ENCODE measurements at regions of chr1 and their contacts with region 1.

Region 1: GRCh38 chr1:224513787-224514209 is 79.2 kb upstream of the WDR26 start:
- DNase-seq: peak; percentile 94
- H3K4me3 Mint-ChIP-seq: no peak overlapping the region
- H3K27ac Mint-ChIP-seq: no peak overlapping the region
- H3K4me1 Mint-ChIP-seq: no peaks in the 10 kb centered on the region
- H3K27me3 Mint-ChIP-seq: no peaks in the 10 kb centered on the region

Region 2: GRCh38 chr1:224106568-224107281 is 407.1 kb before region 1 on chr1:
- CTCF ChIA-PET with region 1: no interaction called
- intact Hi-C with region 1: no loop called
- DNase-seq: peak; percentile 42
- H3K4me3 Mint-ChIP-seq: no peak overlapping the region
- H3K27ac Mint-ChIP-seq: no peak overlapping the region
- H3K4me1 Mint-ChIP-seq: peaks cover 2% of the 10 kb centered on the region
- H3K27me3 Mint-ChIP-seq: no peaks in the 10 kb centered on the region

Region 3: GRCh38 chr1:224528900-224529299 is 15.1 kb after region 1 on chr1:
- CTCF ChIA-PET with region 1: interaction called, 11 read pairs
- intact Hi-C with region 1: no loop called
- DNase-seq: no peak
- H3K4me3 Mint-ChIP-seq: no peak overlapping the region
- H3K27ac Mint-ChIP-seq: no peak overlapping the region
- H3K4me1 Mint-ChIP-seq: no peaks in the 10 kb centered on the region
- H3K27me3 Mint-ChIP-seq: no peaks in the 10 kb centered on the region

Region 4: DNA sequence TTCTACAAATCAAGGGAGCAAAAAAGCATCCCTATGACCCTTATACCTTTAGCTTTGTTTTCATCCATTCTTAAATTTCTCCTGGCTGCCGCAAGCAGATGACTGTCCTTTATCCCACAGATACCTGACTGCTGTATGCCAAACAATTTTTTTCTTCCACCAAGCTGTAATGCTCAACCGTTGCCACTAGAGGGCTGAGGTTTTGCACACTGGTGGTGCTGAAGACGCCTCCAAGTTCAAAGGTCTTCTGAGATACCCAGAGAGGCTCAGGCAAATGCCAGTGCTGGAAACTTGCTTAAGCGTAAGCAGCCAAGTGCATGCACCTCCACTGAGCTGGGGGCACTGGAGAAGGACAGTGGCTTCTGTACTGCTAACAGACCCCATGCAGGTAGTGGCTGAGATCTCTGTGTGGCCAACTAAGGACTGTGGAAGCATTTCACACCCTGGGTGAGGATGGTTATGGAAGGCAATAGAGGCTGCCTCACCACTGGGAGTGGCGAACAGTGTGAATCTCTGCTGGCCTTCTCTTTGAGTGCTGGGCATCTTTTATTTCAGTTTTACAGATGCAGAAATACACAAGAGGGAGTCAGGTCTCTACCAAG is 130.9 kb after region 1 on chr1:
- CTCF ChIA-PET with region 1: interaction called, 18 read pairs
- intact Hi-C with region 1: loop called (anchors 1 kb)
- DNase-seq: peak; percentile 72
- H3K4me3 Mint-ChIP-seq: no peak overlapping the region
- H3K27ac Mint-ChIP-seq: no peak overlapping the region
- H3K4me1 Mint-ChIP-seq: no peaks in the 10 kb centered on the region
- H3K27me3 Mint-ChIP-seq: no peaks in the 10 kb centered on the region

Region 5: DNA sequence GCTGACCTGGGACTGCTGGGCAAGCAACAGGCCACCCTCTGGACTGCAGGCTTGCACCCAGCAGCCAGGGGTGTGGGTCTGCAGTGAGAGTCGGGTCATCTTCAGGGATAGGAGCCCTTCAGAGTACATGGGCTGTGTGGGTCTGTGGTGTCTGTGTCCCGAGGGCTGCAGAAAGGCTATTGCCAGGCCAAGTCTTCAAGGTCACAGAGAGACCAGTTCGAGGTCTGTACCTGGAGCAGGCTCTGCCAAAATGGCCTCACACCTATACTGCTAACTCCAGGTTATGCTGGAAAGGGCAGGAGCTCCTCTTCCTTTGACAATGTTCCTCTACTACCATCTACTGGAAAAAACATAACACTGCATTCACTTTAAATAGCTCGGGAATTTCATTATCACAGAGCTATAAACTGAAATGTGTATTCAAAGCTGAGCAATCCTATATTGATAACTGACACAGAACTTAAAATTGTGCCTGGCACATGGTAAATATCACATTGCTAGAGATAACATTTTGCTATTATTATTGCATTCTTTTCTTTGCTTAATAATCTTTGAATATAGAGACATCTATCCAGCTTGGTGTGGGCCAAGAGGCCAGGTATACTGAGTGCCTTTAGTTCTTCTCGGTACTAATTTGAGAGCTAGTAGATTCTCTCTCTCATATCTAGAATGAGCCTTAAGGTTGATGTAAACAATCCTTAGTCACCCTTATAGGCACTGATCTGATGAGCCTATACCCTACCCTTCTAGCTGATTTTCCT is 408.8 kb after region 1 on chr1:
- CTCF ChIA-PET with region 1: interaction called, 40 read pairs
- intact Hi-C with region 1: loop called (anchors 1 kb)
- DNase-seq: peak; percentile 6
- H3K4me3 Mint-ChIP-seq: no peak overlapping the region
- H3K27ac Mint-ChIP-seq: no peak overlapping the region
- H3K4me1 Mint-ChIP-seq: no peaks in the 10 kb centered on the region
- H3K27me3 Mint-ChIP-seq: peaks cover 14% of the 10 kb centered on the region